ENCODE measurements at regions of chr5 and their contacts with region 1.

Region 1: GRCh38 chr5:83718195-83718825 is 2.3 kb downstream of the HAPLN1 start:
- DNase-seq: peak; percentile 64
- H3K4me3 ChIP-seq: no peak overlapping the region
- H3K27ac ChIP-seq: no peak overlapping the region
- H3K4me1 ChIP-seq: no peaks in the 10 kb centered on the region
- H3K27me3 ChIP-seq: no peaks in the 10 kb centered on the region
- CTCF ChIP-seq: peak; percentile 75

Region 2: GRCh38 chr5:83142526-83142925 is 575.8 kb before region 1 on chr5:
- intact Hi-C with region 1: no loop called
- DNase-seq: no peak
- H3K4me3 ChIP-seq: no peak overlapping the region
- H3K27ac ChIP-seq: no peak overlapping the region
- H3K4me1 ChIP-seq: no peaks in the 10 kb centered on the region
- H3K27me3 ChIP-seq: no peaks in the 10 kb centered on the region
- CTCF ChIP-seq: no peak

Region 3: DNA sequence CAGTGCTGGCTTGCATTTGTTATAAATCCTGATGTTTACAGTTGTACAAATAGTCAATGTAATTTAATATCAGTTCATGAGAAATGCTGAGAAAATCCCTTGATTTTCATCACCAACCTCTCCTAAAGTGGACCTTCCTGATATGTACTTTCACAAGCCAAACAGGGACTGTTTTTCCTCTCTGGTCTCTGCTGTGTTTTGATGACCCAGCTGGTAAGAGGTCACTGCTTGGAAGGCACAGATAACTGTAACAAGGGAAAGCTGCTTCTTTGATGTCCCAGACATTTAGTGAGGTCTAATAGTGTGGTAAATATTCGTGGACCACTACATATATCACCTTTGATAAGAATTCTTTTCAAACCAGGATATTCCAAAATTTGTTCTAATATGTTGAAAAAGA is 71.1 kb after region 1 on chr5:
- intact Hi-C with region 1: no loop called
- DNase-seq: no peak
- H3K4me3 ChIP-seq: no peak overlapping the region
- H3K27ac ChIP-seq: no peak overlapping the region
- H3K4me1 ChIP-seq: no peaks in the 10 kb centered on the region
- H3K27me3 ChIP-seq: no peaks in the 10 kb centered on the region
- CTCF ChIP-seq: no peak

Region 4: DNA sequence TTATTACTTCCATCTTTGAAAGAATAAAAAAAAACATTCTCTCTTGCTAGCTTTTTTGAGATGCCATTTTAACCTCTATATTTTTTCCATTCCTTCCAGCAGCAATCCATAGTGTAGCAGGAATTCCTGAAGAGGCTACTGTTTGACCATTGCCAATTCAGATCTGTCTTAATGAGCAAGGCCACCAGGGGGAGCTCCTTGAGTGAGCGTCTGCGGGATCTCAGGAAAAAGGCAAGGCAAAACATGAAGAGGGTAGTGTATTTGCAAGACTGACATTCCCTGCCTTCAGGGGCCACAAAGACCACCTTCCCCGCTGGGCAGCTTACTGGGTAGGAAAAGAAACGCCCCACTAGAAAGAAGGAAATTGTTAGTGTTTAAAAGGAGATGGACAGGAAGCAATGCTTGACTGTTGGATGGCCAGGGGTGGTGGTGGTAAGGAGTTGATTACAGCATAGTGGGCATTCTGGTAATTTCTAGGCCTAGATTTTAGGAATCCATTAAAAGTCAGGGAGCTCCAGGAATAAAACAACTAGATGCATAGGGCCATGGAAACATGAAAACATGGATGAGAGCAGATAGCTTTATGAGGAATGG is 208.9 kb after region 1 on chr5:
- intact Hi-C with region 1: loop called (anchors 10 kb)
- DNase-seq: peak; percentile 80
- H3K4me3 ChIP-seq: no peak overlapping the region
- H3K27ac ChIP-seq: no peak overlapping the region
- H3K4me1 ChIP-seq: peaks cover 5% of the 10 kb centered on the region
- H3K27me3 ChIP-seq: no peaks in the 10 kb centered on the region
- CTCF ChIP-seq: peak; percentile 67

Region 5: GRCh38 chr5:83955916-83956315 is 237.6 kb after region 1 on chr5:
- intact Hi-C with region 1: no loop called
- DNase-seq: no peak
- H3K4me3 ChIP-seq: no peak overlapping the region
- H3K27ac ChIP-seq: no peak overlapping the region
- H3K4me1 ChIP-seq: no peaks in the 10 kb centered on the region
- H3K27me3 ChIP-seq: no peaks in the 10 kb centered on the region
- CTCF ChIP-seq: no peak

Region 6: DNA sequence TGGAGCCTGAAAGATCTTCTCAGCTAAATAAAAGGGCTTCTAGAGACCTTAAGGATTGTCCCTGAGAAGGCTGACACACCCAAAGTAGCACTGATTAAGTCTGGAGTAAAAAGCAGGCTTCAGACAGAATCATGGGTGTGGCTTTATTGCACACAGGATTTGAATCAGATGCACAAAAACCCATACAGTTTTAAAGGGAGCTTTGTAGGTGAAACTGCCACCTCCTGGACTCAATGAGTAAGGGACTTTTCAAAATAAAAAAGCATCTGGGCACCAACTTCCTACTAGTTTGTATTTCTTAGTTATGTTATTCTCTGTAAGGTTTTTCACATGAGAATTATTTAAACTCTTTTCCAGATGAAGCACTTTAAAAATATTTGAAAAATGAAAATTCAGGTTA is 537.0 kb after region 1 on chr5:
- intact Hi-C with region 1: loop called (anchors 5 kb)
- DNase-seq: no peak
- H3K4me3 ChIP-seq: no peak overlapping the region
- H3K27ac ChIP-seq: no peak overlapping the region
- H3K4me1 ChIP-seq: no peaks in the 10 kb centered on the region
- H3K27me3 ChIP-seq: no peaks in the 10 kb centered on the region
- CTCF ChIP-seq: no peak

Region 7: DNA sequence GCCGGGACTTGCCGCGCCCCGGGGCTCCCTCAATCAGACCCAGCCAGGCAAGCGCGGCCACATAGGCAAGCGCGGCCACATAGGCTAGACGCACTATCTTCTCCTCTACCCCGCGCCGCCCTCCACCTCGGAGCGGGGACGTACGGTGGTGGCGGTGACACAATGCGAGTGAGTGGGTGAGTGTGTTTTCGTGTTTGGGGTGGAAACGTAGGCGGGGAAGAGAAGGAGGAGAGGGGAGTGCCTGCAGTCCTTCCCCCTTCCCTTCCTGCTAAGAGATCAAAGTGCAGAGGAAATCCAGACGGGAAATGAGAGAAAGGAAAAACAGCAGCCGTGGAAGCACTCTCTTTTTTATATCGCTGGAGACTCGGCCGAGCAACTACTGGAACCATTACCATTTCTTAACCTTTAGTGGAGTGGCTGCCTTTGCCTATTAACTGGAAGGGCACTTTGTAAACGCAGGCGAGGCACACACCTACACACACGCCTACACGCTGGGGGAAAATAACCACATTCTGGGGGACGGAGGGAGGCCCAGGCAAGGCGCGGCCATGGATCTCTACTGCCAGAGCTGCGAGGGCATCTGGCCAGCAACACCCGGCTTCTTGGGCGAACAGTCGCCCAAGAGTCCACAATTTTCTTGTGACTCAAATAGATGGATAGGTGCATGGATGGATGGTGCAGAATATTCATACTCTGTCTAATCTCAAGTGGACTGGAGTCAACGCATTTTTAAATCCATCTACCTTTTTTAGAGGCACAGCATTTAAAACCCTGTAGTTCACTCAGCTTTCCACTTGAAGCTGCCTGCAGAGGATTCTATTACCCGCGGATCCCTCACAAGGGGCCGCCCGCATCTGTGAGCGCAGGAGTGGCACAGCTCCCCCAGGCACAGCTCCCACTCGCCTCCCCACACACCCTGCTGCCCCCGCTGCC is 664.3 kb after region 1 on chr5:
- intact Hi-C with region 1: loop called (anchors 5 kb)
- DNase-seq: peak; percentile 79
- H3K4me3 ChIP-seq: peak overlapping the region; percentile 58
- H3K27ac ChIP-seq: peak overlapping the region; percentile 84
- H3K4me1 ChIP-seq: no peaks in the 10 kb centered on the region
- H3K27me3 ChIP-seq: no peaks in the 10 kb centered on the region
- CTCF ChIP-seq: no peak

Region 8: GRCh38 chr5:84450617-84451414 is 732.5 kb after region 1 on chr5:
- intact Hi-C with region 1: loop called (anchors 5 kb)
- DNase-seq: no peak
- H3K4me3 ChIP-seq: no peak overlapping the region
- H3K27ac ChIP-seq: no peak overlapping the region
- H3K4me1 ChIP-seq: no peaks in the 10 kb centered on the region
- H3K27me3 ChIP-seq: no peaks in the 10 kb centered on the region
- CTCF ChIP-seq: no peak

Region 9: GRCh38 chr5:85049020-85049419 is 1330.7 kb after region 1 on chr5:
- intact Hi-C with region 1: loop called (anchors 10 kb)
- DNase-seq: no peak
- H3K4me3 ChIP-seq: no peak overlapping the region
- H3K27ac ChIP-seq: no peak overlapping the region
- H3K4me1 ChIP-seq: no peaks in the 10 kb centered on the region
- H3K27me3 ChIP-seq: no peaks in the 10 kb centered on the region
- CTCF ChIP-seq: no peak